ENCODE measurements at regions of chr11 and their contacts with region 1.

Region 1: DNA sequence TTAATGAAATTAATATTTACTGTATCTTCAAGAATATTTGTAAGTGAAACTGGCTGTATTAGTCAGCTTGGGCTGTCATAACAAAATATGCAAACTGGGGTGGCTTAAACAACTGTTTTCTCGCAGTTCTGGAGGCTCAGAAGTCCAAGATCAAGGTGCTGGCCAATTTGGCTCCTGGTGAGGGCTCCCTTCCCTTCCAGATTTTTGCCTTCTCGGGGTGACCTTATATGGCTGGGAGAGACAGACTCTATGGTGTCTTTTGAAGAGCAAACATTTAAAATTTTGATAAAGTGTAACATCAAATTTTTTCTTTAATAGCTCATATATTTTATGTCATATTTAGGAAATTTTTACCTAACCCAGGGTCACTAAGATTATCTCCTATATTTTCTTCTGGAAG is 30.2 kb downstream of the CSTPP1 start:
- DNase-seq: no peak
- ATAC-seq: no peak
- H3K4me3 ChIP-seq: no peak overlapping the region
- H3K27ac ChIP-seq: no peak overlapping the region
- H3K4me1 ChIP-seq: no peaks in the 10 kb centered on the region
- H3K27me3 ChIP-seq: no peaks in the 10 kb centered on the region
- CTCF ChIP-seq: no peak

Region 2: DNA sequence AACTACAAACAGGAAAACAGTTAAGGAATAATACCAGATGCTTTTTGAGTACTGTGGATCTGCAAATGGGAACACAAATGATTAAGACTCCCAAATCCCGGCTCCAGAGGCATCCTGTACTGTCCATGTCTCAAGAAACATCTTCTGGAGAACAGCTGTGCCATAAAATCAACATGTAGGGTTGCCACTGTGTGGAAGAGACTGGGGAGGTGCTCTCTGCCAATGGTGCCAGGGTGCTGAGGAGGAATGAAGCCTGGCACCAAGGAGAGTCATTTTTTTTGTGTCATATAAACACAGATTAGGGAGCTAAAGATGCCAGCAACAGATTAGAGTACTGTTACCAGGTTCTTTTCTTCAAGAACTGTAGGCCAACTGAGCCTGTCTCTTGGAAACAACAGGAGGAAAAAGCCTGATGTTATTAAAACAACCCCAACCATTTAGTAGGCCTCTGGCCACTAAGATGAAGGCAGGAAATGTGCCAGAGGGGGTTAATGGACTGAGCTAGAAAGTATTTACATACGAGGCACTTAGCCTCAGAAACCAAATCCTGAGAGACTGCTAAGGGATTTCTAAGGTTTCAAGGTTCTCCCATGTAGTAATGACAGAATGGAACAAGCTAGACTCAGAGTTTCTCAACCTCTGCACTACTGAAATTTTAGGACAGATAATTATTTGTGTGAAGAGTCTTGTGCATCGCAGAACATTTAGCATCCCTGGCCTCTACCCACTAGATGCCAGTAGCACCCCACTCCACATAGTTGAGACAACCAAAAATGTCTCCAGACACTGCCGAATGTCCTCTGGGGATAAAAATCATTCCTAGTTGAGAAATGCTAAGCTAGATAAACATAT is 520.6 kb before region 1 on chr11:
- CTCF ChIA-PET with region 1: no interaction called
- POLR2A ChIA-PET with region 1: interaction called, 11 read pairs
- in situ Hi-C with region 1: no loop called
- intact Hi-C with region 1: no loop called
- DNase-seq: no peak
- ATAC-seq: no peak
- H3K4me3 ChIP-seq: no peak overlapping the region
- H3K27ac ChIP-seq: no peak overlapping the region
- H3K4me1 ChIP-seq: no peaks in the 10 kb centered on the region
- H3K27me3 ChIP-seq: no peaks in the 10 kb centered on the region
- CTCF ChIP-seq: peak; percentile 21

Region 3: DNA sequence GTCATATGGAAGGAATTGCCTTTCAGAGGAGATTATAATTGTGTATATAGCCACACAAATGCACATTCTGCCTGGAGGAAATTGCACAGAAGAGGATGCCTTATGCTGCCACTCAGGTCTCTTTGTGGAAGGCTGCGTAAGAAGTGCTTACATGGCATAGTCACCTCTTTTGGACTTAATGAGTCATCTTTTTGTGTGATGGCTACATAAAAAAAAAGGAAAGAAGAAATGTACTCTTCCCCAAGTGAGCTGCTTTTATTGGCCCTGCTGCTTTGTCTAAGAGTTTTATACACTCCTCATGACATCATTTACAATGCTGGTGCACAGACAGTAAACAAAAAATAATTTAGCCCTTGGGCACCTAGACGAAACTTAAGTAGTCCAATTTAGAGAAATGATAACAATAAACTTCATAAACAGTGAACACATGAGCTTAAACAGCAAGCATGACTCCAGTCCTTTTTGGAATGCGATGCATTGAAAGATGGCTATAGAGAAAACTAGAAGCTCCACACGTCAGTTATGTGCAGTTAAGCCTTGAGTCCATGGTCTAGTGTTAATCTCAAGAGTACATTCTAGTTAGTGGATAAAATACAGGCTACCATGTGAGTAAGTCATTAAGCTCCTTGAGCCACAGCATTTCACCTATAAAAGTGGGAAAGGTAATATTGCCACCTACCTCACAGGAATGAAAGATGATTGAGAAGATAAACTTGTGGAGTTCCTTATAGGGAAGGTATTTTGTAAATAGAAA is 18.2 kb before region 1 on chr11:
- CTCF ChIA-PET with region 1: no interaction called
- POLR2A ChIA-PET with region 1: no interaction called
- in situ Hi-C with region 1: no loop called
- intact Hi-C with region 1: no loop called
- DNase-seq: no peak
- ATAC-seq: no peak
- H3K4me3 ChIP-seq: no peak overlapping the region
- H3K27ac ChIP-seq: no peak overlapping the region
- H3K4me1 ChIP-seq: no peaks in the 10 kb centered on the region
- H3K27me3 ChIP-seq: no peaks in the 10 kb centered on the region
- CTCF ChIP-seq: no peak

Measured in Panc1 (cell line).